ENCODE measurements at regions of chr3 and their contacts with region 1.

Region 1: GRCh38 chr3:185733980-185734724 is 90.7 kb downstream of the IGF2BP2 start:
- DNase-seq: no peak
- H3K4me3 ChIP-seq: no peak overlapping the region
- H3K27me3 ChIP-seq: no peaks in the 10 kb centered on the region
- CTCF ChIP-seq: peak; percentile 70

Region 2: DNA sequence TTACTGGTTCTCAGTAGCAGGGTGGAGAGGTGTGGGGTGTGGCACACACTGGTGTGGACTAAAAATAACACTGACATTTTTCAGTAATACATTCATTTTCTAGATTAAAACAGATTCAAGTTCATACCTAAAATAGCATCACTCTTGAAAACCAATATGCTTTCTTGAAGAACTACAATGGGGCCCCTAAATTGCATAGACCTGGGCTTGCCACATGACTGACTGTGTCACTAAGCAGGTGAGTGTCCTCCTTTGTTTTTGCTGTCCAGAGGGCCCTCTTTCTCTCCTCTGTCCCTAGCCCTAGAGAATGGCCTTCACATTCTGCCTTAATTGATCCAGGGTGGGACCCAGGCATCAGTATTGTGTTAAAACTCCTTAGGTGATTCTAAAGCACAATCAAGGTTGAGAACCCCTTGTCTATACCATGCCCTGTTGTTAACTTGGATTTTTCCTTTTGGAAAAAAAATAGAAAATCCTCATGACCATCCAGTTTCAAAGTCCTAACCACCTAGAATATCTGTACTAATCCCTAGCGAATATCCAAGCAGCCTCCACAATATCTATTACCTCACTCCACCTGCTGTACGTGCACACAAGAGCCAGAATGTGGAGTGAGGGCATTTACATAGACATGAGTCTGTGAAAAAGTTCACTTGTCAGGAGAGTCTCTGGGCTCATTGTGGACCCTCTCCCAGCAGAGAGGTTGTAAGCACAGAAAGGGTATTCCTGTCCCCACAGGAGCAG is 216.6 kb before region 1 on chr3:
- CTCF ChIA-PET with region 1: no interaction called
- POLR2A ChIA-PET with region 1: no interaction called
- DNase-seq: no peak
- H3K4me3 ChIP-seq: no peak overlapping the region
- H3K27me3 ChIP-seq: peaks cover 7% of the 10 kb centered on the region
- CTCF ChIP-seq: no peak

Region 3: DNA sequence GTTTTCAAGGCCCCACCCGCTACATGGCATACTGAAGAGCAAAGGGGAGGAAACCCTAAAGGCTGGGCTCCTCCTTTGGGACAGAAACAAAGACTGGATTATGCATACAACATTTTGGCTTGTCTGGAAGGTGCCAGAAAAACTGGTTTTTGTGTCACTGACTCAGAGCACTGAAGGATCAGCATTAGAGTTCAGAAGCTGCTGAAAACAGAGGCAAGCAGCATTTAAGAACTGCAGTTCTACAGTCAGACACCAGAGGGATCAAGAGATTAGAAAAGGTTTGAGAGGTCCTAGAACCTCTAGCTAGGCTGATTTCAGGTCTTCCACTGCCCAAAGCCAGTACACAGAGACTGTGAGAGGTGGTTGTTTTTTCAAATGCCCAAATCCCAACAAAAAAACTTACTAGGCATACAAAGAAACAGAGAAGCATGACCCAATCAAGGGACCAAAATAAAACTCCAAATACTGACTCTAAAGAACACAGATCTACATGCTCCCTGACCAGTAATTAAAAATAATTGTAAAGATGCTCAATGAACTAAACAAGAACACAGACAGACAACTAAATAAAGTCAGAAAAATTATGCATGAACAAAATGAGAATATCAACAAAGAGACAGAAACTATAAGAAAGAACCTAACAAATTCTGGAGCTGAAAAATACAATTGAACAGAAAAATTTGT is 56.9 kb before region 1 on chr3:
- CTCF ChIA-PET with region 1: interaction called, 17 read pairs
- POLR2A ChIA-PET with region 1: no interaction called
- DNase-seq: no peak
- H3K4me3 ChIP-seq: no peak overlapping the region
- H3K27me3 ChIP-seq: no peaks in the 10 kb centered on the region
- CTCF ChIP-seq: peak; percentile 81

Region 4: DNA sequence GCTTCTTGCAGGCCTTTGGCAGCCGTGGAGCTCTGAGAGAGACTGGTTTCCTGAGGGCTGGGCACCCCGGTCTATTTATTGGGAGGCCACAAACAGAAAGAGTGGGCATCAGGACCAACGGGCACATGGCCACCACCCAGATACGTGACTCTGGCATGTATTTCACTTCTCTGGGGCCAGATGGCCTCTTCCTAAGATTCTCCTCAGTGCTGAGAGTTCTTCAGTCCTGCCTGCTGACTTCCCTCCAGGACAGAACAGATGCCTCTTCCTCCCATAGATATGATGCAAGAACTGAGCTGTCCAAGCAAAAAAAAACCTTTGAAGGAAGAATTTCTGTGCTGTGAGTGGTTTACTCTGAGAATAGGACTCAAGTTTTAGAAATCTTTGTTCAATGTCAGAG is 17.0 kb before region 1 on chr3:
- CTCF ChIA-PET with region 1: interaction called, 12 read pairs
- POLR2A ChIA-PET with region 1: no interaction called
- DNase-seq: peak; percentile 76
- H3K4me3 ChIP-seq: no peak overlapping the region
- H3K27me3 ChIP-seq: no peaks in the 10 kb centered on the region
- CTCF ChIP-seq: no peak

Region 5: DNA sequence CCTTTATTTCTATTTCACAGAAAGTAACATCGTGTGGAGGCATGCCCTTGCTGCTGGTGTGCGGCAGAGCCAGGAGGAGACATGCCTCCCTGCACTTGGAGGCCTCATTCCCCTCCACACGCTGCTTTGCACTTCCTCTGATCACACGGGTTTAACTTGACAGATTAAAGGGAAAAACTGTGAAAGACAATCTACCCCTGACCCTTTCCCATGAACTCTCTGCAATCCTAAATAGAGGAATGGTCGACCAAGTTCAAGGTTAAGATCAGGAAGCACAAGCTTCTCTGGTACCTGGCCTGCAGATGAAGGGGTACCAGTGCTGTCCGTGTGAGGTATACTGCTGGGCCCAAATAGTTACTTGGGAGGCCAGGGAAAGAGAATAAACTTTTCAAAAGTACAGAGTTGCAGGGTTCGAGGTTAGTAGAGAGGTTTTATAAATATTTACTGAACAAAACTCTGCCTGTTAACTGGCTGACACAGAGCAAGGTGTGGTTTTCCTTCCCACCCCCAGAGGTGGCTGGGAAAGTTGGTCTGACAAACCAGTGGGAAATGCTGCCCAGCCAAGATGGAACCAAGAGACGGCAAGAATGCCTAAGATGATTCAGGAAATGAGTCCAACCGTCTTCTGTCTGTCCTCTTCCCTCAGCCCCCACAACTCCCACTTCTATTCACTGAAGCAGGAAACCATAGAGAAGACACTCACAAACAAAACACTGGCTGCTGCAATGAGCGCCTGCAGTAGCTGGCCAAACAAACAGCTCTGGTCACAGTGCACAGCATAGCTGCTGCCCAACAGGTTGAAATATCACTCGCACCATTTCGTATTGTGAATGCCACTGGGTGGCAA is 11.1 kb after region 1 on chr3:
- CTCF ChIA-PET with region 1: interaction called, 39 read pairs
- POLR2A ChIA-PET with region 1: interaction called, 9 read pairs
- DNase-seq: peak; percentile 85
- H3K4me3 ChIP-seq: no peak overlapping the region
- H3K27me3 ChIP-seq: no peaks in the 10 kb centered on the region
- CTCF ChIP-seq: no peak

Region 6: GRCh38 chr3:185823078-185824044 is 89.2 kb after region 1 on chr3:
- CTCF ChIA-PET with region 1: interaction called, 10 read pairs
- POLR2A ChIA-PET with region 1: interaction called, 5 read pairs
- DNase-seq: no peak
- H3K4me3 ChIP-seq: peak overlapping the region; percentile 92
- H3K27me3 ChIP-seq: no peaks in the 10 kb centered on the region
- CTCF ChIP-seq: peak; percentile 28

Region 7: GRCh38 chr3:186053954-186054791 is 320.0 kb after region 1 on chr3:
- CTCF ChIA-PET with region 1: no interaction called
- POLR2A ChIA-PET with region 1: no interaction called
- DNase-seq: no peak
- H3K4me3 ChIP-seq: no peak overlapping the region
- H3K27me3 ChIP-seq: no peaks in the 10 kb centered on the region
- CTCF ChIP-seq: no peak

Measured in BJ (cell line).